Psoas muscle (tissue), 8 donors: ENCODE measurements at regions of chr9 and their contacts with region 1.

Region 1: GRCh38 chr9:32783169-32783891 is at the start of gene TMEM215:
- DNase-seq: peak; percentile 13 to 58
- ATAC-seq: peak in 3 of 4 donors; percentile 19 to 30 (median 26)
- H3K4me3 ChIP-seq: peak within 1 kb of the TSS; percentile 54
- H3K27ac ChIP-seq: no peak within 1 kb of the TSS
- H3K4me1 ChIP-seq: no peaks in the 10 kb centered on the region
- H3K27me3 ChIP-seq: peaks cover 0 to 56% (median 17%) of the 10 kb centered on the region in 3 donors
- CTCF ChIP-seq: no peak
- total RNA-seq, gene TMEM215: 0.12 TPM in 1 of 4 donors, not detected in the others

Region 2: GRCh38 chr9:32738501-32739172 is 44.7 kb before region 1 on chr9:
- intact Hi-C with region 1: loop called in 1 of 2 experiments (anchors 5 kb)
- DNase-seq: no peak
- ATAC-seq: no peak
- H3K4me3 ChIP-seq: no peak overlapping the region
- H3K27ac ChIP-seq: no peak overlapping the region
- H3K4me1 ChIP-seq: no peaks in the 10 kb centered on the region
- H3K27me3 ChIP-seq: no peaks in the 10 kb centered on the region
- CTCF ChIP-seq: no peak

Region 3: DNA sequence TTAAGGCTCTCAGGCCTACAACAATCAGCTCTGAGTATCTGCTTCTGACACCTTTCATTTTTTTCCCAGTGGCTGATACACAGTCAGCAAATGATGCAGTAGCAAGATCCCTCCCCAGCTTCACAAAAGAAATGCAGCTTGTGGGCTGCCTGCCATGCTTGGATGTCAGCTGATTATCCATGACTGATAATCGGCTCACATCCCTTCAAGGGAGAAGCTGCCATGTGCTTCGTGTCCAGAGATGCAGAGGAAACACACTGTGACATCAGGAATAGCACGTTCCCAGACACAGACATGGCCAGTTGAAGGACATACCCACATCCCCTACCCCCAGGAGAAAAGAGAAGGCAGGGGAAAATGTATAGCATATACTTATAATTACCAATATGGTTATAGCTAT is 27.9 kb after region 1 on chr9:
- intact Hi-C with region 1: no loop called
- DNase-seq: no peak
- ATAC-seq: no peak
- H3K4me3 ChIP-seq: no peak overlapping the region
- H3K27ac ChIP-seq: no peak overlapping the region
- H3K4me1 ChIP-seq: no peaks in the 10 kb centered on the region
- H3K27me3 ChIP-seq: no peaks in the 10 kb centered on the region
- CTCF ChIP-seq: no peak

Region 4: GRCh38 chr9:32986971-32987370 is 203.6 kb after region 1 on chr9:
- intact Hi-C with region 1: no loop called
- DNase-seq: no peak
- ATAC-seq: no peak
- H3K4me3 ChIP-seq: no peak overlapping the region
- H3K27ac ChIP-seq: no peak overlapping the region
- H3K4me1 ChIP-seq: no peaks in the 10 kb centered on the region
- H3K27me3 ChIP-seq: no peaks in the 10 kb centered on the region
- CTCF ChIP-seq: no peak